Natural killer cell (primary cell): ENCODE measurements at regions of chr7 and their contacts with region 1.

Region 1: GRCh38 chr7:99504603-99505323 is at the start of gene ZKSCAN5:
- DNase-seq: peak; percentile 97
- ATAC-seq: peak; percentile 84 to 95 (median 85)
- H3K4me3 ChIP-seq: peak within 1 kb of the TSS; percentile 95
- H3K4me3 Mint-ChIP-seq: peak within 1 kb of the TSS; percentile 98
- H3K27ac ChIP-seq: peak within 1 kb of the TSS; percentile 90
- H3K27ac Mint-ChIP-seq: peak within 1 kb of the TSS; percentile 95 to 96
- H3K4me1 ChIP-seq: peaks cover 30% of the 10 kb centered on the region
- H3K4me1 Mint-ChIP-seq: peaks cover 18 to 24% of the 10 kb centered on the region in 2 donors
- H3K27me3 ChIP-seq: no peaks in the 10 kb centered on the region
- H3K27me3 Mint-ChIP-seq: no peaks in the 10 kb centered on the region
- CTCF ChIP-seq: no peak
- total RNA-seq, gene ZKSCAN5: 6.8 to 9.7 (median 7.4) TPM

Region 2: GRCh38 chr7:99374103-99375064 is 130.4 kb before region 1 on chr7 and contains the start of gene ARPC1B:
- intact Hi-C with region 1: loop called (anchors 10 kb)
- DNase-seq: peak; percentile 72 to 94
- ATAC-seq: peak; percentile 71 to 90 (median 84)
- H3K4me3 ChIP-seq: peak within 1 kb of the TSS; percentile 76
- H3K4me3 Mint-ChIP-seq: peak within 1 kb of the TSS; percentile 85
- H3K27ac ChIP-seq: peak within 1 kb of the TSS; percentile 71
- H3K27ac Mint-ChIP-seq: peak within 1 kb of the TSS; percentile 86 to 97
- H3K4me1 ChIP-seq: peaks cover 41% of the 10 kb centered on the region
- H3K4me1 Mint-ChIP-seq: peaks cover 17 to 25% of the 10 kb centered on the region in 2 donors
- H3K27me3 ChIP-seq: no peaks in the 10 kb centered on the region
- H3K27me3 Mint-ChIP-seq: no peaks in the 10 kb centered on the region
- CTCF ChIP-seq: no peak
- total RNA-seq, gene ARPC1B: 161 to 184 (median 179) TPM

Region 3: DNA sequence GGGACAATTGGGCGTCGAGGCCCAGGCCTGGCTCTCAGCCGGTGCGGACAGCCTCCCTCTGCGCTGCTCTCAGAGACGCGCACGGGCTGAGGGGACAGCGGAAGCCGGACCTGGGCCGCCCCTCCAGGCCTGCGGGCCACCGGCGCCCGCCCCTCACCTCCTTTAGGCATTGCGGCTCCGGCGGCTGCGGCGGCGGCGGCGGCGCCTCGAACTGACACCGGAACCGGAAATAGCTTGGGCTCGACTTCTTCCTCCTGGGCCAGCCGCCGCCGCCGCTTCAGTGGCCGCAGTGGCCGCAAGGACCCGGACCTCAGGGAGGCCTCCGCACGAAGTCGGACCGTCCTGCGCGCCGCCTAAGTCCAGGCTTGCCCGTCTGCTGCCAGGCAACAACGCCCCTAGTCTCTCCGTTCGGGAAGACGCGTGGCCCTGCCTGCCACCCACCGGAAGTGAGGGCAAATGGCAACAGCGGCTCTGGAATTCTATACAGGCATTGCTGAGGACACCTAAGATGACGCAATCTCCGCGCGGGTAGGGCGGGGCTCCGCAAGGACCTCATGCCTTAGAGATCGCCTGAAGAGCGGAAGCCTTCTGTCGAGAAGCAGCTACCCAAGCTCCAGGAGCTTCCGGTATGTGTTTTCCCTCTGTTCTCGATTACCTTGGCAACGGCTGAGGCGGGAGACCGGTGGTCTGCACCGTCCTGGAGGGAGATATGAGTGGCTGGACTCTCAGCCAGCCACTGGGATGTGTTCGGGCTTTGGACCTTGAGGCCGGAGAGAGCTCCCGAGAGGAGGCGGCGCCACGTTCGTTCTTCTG is 96.2 kb before region 1 on chr7 and contains the starts of genes BUD31 and PDAP1:
- intact Hi-C with region 1: loop called (anchors 2 kb)
- DNase-seq: peak; percentile 95 to 98
- ATAC-seq: peak; percentile 84 to 95 (median 85)
- H3K4me3 ChIP-seq: peak within 1 kb of the TSS; percentile 83
- H3K4me3 Mint-ChIP-seq: peak within 1 kb of the TSS; percentile 96
- H3K27ac ChIP-seq: peak within 1 kb of the TSS; percentile 98
- H3K27ac Mint-ChIP-seq: peak within 1 kb of the TSS; percentile 93
- H3K4me1 ChIP-seq: peaks cover 57% of the 10 kb centered on the region
- H3K4me1 Mint-ChIP-seq: peaks cover 50 to 59% of the 10 kb centered on the region in 2 donors
- H3K27me3 ChIP-seq: no peaks in the 10 kb centered on the region
- H3K27me3 Mint-ChIP-seq: no peaks in the 10 kb centered on the region
- CTCF ChIP-seq: no peak
- total RNA-seq, gene BUD31: 145 to 190 (median 187) TPM
- total RNA-seq, gene PDAP1: 55.3 to 60.6 (median 59.3) TPM

Region 4: DNA sequence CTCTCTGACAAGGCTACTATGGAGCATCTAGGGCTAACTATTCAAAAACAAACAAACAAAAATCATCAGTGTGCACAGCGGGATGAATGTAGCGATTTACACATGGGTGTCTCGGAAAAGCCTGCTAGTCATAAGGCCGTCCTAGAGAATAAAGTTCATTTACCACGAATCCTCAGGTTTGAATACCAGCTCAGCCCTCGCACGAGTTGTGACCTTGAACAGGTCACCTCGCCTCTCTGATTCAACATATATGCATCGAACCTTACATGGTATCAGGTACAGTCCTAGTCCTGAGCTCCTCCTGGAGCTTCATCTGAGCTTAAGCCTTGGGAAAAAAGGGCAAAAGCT is 39.4 kb before region 1 on chr7:
- intact Hi-C with region 1: loop called (anchors 1 kb)
- DNase-seq: no peak
- ATAC-seq: peak in 1 of 3 donors; percentile 0
- H3K4me3 ChIP-seq: peak overlapping the region; percentile 78
- H3K4me3 Mint-ChIP-seq: peak overlapping the region; percentile 96
- H3K27ac ChIP-seq: peak overlapping the region; percentile 69
- H3K27ac Mint-ChIP-seq: peak overlapping the region; percentile 91 to 98
- H3K4me1 ChIP-seq: peaks cover 20% of the 10 kb centered on the region
- H3K4me1 Mint-ChIP-seq: peaks cover 22 to 33% of the 10 kb centered on the region in 2 donors
- H3K27me3 ChIP-seq: no peaks in the 10 kb centered on the region
- H3K27me3 Mint-ChIP-seq: no peaks in the 10 kb centered on the region
- CTCF ChIP-seq: no peak

Region 5: DNA sequence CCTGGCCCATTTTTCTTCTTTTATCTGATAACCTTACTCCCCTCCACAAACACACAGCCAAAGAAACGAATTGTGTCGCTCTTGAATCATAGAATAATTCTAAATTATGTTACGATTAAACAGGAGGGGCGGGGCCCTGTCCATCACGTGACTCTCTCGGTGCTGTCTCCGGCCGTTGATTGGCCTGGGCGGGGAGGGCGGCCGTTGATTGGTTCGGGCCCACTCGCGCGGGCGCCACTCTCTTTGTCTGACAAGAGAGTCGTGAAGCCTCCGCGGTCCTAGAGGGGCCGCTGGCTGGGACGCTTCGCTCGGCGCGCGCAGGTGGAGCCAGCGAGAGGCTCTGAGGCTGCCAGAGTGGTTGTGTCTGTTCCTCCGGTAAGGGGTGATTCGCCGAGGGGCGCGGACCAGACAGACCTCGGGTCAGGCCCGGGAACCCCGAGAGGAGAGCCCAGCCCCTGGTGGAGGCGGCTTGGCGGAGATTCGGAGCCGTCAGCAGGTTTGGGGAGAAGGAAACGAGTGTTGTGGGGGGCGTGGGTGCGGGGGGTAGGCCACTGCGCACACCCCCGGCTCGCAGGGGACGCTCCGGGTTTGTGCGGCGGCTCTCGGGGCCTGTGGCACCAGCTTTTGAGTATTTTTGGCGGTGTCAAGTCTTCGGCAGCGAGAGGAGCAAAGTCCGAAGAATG is 32.1 kb before region 1 on chr7 and contains the start of gene ZNF789:
- intact Hi-C with region 1: loop called (anchors 1 kb)
- DNase-seq: peak; percentile 95 to 97
- ATAC-seq: peak; percentile 96 to 100 (median 97)
- H3K4me3 ChIP-seq: peak within 1 kb of the TSS; percentile 64
- H3K4me3 Mint-ChIP-seq: peak within 1 kb of the TSS; percentile 100
- H3K27ac ChIP-seq: peak within 1 kb of the TSS; percentile 54
- H3K27ac Mint-ChIP-seq: peak within 1 kb of the TSS; percentile 94 to 96
- H3K4me1 ChIP-seq: peaks cover 15% of the 10 kb centered on the region
- H3K4me1 Mint-ChIP-seq: peaks cover 19 to 26% of the 10 kb centered on the region in 2 donors
- H3K27me3 ChIP-seq: no peaks in the 10 kb centered on the region
- H3K27me3 Mint-ChIP-seq: no peaks in the 10 kb centered on the region
- CTCF ChIP-seq: no peak
- total RNA-seq, gene ZNF789: 16.7 to 18.6 (median 16.8) TPM

Region 6: GRCh38 chr7:99551767-99552463 is 47.2 kb after region 1 on chr7 and contains the start of gene FAM200A:
- intact Hi-C with region 1: loop called (anchors 1 kb)
- DNase-seq: peak; percentile 79 to 96
- ATAC-seq: peak; percentile 97 to 99 (median 98)
- H3K4me3 ChIP-seq: peak within 1 kb of the TSS; percentile 90
- H3K4me3 Mint-ChIP-seq: peak within 1 kb of the TSS; percentile 92
- H3K27ac ChIP-seq: peak within 1 kb of the TSS; percentile 82
- H3K27ac Mint-ChIP-seq: peak within 1 kb of the TSS; percentile 94 to 95
- H3K4me1 ChIP-seq: peaks cover 11% of the 10 kb centered on the region
- H3K4me1 Mint-ChIP-seq: peaks cover 24 to 40% of the 10 kb centered on the region in 2 donors
- H3K27me3 ChIP-seq: no peaks in the 10 kb centered on the region
- H3K27me3 Mint-ChIP-seq: no peaks in the 10 kb centered on the region
- CTCF ChIP-seq: no peak
- total RNA-seq, gene FAM200A: 2.3 to 3.1 (median 2.6) TPM

Region 7: GRCh38 chr7:99616359-99617191 is 111.8 kb after region 1 on chr7 and contains the start of gene ZSCAN25:
- intact Hi-C with region 1: loop called (anchors 5 kb)
- DNase-seq: peak; percentile 79 to 94
- ATAC-seq: peak; percentile 94 to 96 (median 95)
- H3K4me3 ChIP-seq: peak within 1 kb of the TSS; percentile 80
- H3K4me3 Mint-ChIP-seq: peak within 1 kb of the TSS; percentile 94
- H3K27ac ChIP-seq: peak within 1 kb of the TSS; percentile 76
- H3K27ac Mint-ChIP-seq: peak within 1 kb of the TSS; percentile 90 to 96
- H3K4me1 ChIP-seq: peaks cover 17% of the 10 kb centered on the region
- H3K4me1 Mint-ChIP-seq: peaks cover 30 to 49% of the 10 kb centered on the region in 2 donors
- H3K27me3 ChIP-seq: no peaks in the 10 kb centered on the region
- H3K27me3 Mint-ChIP-seq: no peaks in the 10 kb centered on the region
- CTCF ChIP-seq: no peak
- total RNA-seq, gene ZSCAN25: 24.4 to 37.4 (median 27.8) TPM

Region 8: GRCh38 chr7:99642027-99642426 is 137.3 kb after region 1 on chr7:
- intact Hi-C with region 1: no loop called
- DNase-seq: no peak
- ATAC-seq: no peak
- H3K4me3 ChIP-seq: no peak overlapping the region
- H3K4me3 Mint-ChIP-seq: no peak overlapping the region
- H3K27ac ChIP-seq: no peak overlapping the region
- H3K27ac Mint-ChIP-seq: no peak overlapping the region
- H3K4me1 ChIP-seq: no peaks in the 10 kb centered on the region
- H3K4me1 Mint-ChIP-seq: peaks cover 0 to 5% of the 10 kb centered on the region in 2 donors
- H3K27me3 ChIP-seq: no peaks in the 10 kb centered on the region
- H3K27me3 Mint-ChIP-seq: no peaks in the 10 kb centered on the region
- CTCF ChIP-seq: no peak

Region 9: DNA sequence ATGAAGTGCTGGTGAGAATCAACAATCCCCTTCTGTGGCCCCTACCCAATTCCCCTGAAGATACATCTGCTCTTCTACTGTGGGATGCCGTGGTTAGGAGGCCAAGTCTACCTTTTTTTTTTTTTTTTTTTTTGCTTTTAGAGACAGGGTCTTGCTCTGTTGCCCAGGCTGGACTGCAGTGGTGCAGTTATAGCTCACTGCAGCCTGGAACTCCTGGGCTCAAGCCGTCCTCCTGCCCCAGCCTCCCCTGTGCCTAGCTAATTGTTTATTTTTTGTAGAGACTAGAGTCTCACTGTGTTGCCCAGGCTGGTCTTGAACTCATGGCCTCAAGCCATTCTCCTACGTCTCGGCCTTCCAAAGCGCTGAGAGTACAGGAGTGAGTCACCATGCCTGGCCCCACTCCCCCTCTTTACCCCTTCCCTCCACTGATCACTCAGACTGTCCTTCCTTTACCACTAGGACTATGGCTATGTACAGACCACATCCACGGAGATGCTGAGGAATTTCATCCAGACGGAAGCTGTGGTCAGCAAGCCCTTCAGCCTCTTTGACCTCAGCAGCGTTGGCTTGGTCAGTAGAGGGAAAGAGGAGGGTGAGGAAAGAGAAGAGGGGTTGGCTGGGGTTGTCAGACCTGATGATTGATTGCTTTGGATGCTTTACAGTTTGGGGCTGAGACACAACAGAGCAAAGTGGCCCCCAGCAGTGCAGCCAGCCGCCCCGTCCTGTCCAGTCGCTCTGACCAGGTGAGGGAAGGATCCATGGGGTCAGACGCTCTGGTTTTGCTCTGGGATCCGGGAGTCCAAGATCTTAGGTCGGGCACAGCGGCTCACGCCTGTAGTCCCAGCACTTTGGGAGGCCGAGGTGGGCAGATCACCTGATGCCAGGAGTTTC is 598.4 kb after region 1 on chr7:
- intact Hi-C with region 1: no loop called
- DNase-seq: no peak
- ATAC-seq: no peak
- H3K4me3 ChIP-seq: no peak overlapping the region
- H3K4me3 Mint-ChIP-seq: peak overlapping the region; percentile 95
- H3K27ac ChIP-seq: no peak overlapping the region
- H3K27ac Mint-ChIP-seq: peak overlapping the region; percentile 96 to 98
- H3K4me1 ChIP-seq: peaks cover 28% of the 10 kb centered on the region
- H3K4me1 Mint-ChIP-seq: peaks cover 29 to 39% of the 10 kb centered on the region in 2 donors
- H3K27me3 ChIP-seq: no peaks in the 10 kb centered on the region
- H3K27me3 Mint-ChIP-seq: no peaks in the 10 kb centered on the region
- CTCF ChIP-seq: no peak